PC-3 (cell line): ENCODE measurements at regions of chr11 and their contacts with region 1.

Region 1: DNA sequence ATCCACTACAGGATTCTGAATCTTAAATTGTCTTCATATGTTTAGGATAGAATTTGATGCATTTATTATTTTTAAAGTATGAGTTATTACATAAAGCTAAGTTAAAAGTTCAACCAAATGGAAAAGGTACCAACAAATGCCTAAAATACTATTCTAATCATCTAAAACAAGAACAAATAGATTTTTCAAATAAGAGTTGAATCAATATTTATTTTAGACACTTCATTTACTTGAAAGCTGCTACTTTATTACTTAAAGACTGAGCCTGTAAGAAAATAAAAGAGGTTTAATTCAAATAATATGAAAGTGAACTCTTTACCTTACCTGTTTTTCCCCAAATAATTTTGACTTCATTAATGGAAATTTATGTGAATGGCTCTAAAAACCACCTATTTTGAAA is 16.9 kb downstream of the LDHAL6A start:
- DNase-seq: no peak
- ATAC-seq: no peak
- H3K4me3 ChIP-seq: no peak overlapping the region
- H3K27ac ChIP-seq: no peak overlapping the region
- H3K4me1 ChIP-seq: no peaks in the 10 kb centered on the region
- H3K27me3 ChIP-seq: no peaks in the 10 kb centered on the region
- CTCF ChIP-seq: no peak

Region 2: GRCh38 chr11:18368221-18368620 is 104.4 kb before region 1 on chr11:
- CTCF ChIA-PET with region 1: no interaction called
- POLR2A ChIA-PET with region 1: interaction called, 12 read pairs
- intact Hi-C with region 1: no loop called
- DNase-seq: no peak
- ATAC-seq: peak; percentile 40; the same call in 1 of the 2 replicates
- H3K4me3 ChIP-seq: no peak overlapping the region
- H3K27ac ChIP-seq: no peak overlapping the region
- H3K4me1 ChIP-seq: no peaks in the 10 kb centered on the region
- H3K27me3 ChIP-seq: no peaks in the 10 kb centered on the region
- CTCF ChIP-seq: no peak